ENCODE measurements at regions of chr2 and their contacts with region 1.

Region 1: DNA sequence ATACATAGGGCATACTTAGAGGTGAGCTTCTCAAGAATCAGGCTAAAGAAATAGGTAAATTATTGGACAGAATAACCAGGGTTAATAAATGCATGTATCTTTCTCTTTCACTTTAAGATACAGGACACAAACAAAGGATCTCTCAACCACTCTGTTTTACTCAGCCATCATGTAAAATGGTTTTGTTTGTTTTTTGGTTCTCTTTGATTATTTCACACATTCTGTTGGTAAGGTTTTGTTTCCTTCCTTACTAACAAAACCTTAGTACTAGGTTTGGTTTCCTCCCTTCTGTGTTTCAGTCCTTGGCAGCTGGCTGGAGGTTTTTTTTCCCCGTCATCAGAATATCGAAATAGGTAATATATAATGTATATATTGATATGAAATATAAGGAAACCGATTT is 1506.8 kb upstream of the TMEFF2 start:
- DNase-seq: no peak
- CTCF ChIP-seq: no peak

Region 2: DNA sequence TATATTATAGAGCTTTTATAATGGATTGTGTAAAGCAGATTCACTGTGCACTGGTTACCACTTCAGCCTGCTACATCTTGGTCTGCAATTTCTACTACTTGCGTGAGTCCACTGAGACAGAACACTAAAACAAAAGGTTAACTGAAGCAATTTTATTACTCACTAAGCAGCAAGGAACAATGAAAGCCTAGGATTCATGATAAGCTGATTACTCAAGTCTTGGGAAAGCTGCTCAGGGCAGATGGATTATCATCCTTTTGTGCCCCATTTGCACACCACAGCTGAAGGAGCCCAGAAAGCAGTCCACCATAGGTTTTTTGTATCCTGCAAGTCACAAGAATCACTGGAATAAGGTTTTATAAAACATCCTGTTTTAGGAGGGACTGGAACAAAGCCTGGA is 291.5 kb before region 1 on chr2:
- in situ Hi-C with region 1: no loop called
- DNase-seq: no peak
- CTCF ChIP-seq: no peak

Region 3: DNA sequence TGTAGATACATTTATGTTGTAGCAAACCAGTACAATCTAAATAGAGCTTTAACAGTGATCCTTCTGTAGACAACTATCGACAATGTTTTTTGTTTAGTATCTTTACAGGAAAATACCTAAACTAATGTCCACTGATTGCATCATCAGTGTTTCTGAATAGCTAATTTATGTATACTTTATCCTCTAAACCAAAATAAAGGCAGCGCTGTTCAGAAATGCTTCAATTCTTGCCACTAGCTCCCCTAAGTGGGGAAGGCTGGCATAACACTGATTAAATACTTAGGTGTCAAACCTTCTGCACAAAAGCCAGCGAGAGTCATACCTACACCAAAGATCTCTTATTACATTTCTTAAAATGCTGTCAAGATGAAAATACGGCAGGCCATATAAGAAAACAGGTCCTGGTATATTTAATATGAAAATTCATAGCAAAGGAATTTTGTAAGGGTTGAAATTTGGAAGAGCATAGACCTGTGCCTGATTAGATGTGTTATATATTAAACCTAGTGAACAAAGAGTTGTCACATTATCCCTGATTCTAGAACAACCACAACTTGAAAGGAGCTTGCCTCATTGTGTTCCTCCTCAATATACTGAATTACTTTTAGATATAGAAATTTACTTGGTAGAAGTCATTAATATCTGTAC is 262.1 kb after region 1 on chr2:
- in situ Hi-C with region 1: loop called (anchors 25 kb)
- DNase-seq: peak; percentile 3
- CTCF ChIP-seq: peak; percentile 45